Mucosa of descending colon (tissue), 3 donors: ENCODE measurements at regions of chr14 and their contacts with region 1.

Region 1: GRCh38 chr14:54329082-54329695 is 67.6 kb upstream of the CDKN3 start:
- DNase-seq: peak in 1 of 3 donors; percentile 41
- ATAC-seq: peak; percentile 71
- H3K4me3 ChIP-seq: no peak overlapping the region
- H3K4me1 ChIP-seq: no peaks in the 10 kb centered on the region
- CTCF ChIP-seq: peak; percentile 70

Region 2: GRCh38 chr14:54175298-54175942 is 153.8 kb before region 1 on chr14:
- intact Hi-C with region 1: loop called in 1 of 2 experiments (anchors 10 kb)
- DNase-seq: peak in 1 of 3 donors; percentile 87
- ATAC-seq: peak; percentile 77
- H3K4me3 ChIP-seq: no peak overlapping the region
- H3K4me1 ChIP-seq: peaks cover 16% of the 10 kb centered on the region
- CTCF ChIP-seq: peak; percentile 55

Region 3: GRCh38 chr14:54377501-54377900 is 48.3 kb after region 1 on chr14:
- intact Hi-C with region 1: no loop called
- DNase-seq: no peak
- ATAC-seq: no peak
- H3K4me3 ChIP-seq: no peak overlapping the region
- H3K4me1 ChIP-seq: no peaks in the 10 kb centered on the region
- CTCF ChIP-seq: no peak

Region 4: GRCh38 chr14:54566410-54567223 is 237.4 kb after region 1 on chr14 and contains the start of gene SAMD4A:
- intact Hi-C with region 1: no loop called
- DNase-seq: peak; percentile 74 to 89 (median 79)
- ATAC-seq: peak; percentile 40
- H3K4me3 ChIP-seq: peak within 1 kb of the TSS; percentile 47
- H3K4me1 ChIP-seq: peaks cover 14% of the 10 kb centered on the region
- CTCF ChIP-seq: no peak
- total RNA-seq, gene SAMD4A: 14.7 to 82.1 (median 16.5) TPM